Colonic mucosa (tissue), 4 donors: ENCODE measurements at regions of chr22 and their contacts with region 1.

Region 1: GRCh38 chr22:23767673-23768548 is at the start of gene CHCHD10:
- DNase-seq: peak; percentile 90
- H3K4me3 ChIP-seq: peak within 1 kb of the TSS; percentile 80
- H3K27ac ChIP-seq: peak within 1 kb of the TSS; percentile 77
- H3K4me1 ChIP-seq: peaks cover 10% of the 10 kb centered on the region
- H3K27me3 ChIP-seq: no peaks in the 10 kb centered on the region
- CTCF ChIP-seq: peak; percentile 85
- total RNA-seq, gene CHCHD10: 420 to 719 TPM

Region 2: DNA sequence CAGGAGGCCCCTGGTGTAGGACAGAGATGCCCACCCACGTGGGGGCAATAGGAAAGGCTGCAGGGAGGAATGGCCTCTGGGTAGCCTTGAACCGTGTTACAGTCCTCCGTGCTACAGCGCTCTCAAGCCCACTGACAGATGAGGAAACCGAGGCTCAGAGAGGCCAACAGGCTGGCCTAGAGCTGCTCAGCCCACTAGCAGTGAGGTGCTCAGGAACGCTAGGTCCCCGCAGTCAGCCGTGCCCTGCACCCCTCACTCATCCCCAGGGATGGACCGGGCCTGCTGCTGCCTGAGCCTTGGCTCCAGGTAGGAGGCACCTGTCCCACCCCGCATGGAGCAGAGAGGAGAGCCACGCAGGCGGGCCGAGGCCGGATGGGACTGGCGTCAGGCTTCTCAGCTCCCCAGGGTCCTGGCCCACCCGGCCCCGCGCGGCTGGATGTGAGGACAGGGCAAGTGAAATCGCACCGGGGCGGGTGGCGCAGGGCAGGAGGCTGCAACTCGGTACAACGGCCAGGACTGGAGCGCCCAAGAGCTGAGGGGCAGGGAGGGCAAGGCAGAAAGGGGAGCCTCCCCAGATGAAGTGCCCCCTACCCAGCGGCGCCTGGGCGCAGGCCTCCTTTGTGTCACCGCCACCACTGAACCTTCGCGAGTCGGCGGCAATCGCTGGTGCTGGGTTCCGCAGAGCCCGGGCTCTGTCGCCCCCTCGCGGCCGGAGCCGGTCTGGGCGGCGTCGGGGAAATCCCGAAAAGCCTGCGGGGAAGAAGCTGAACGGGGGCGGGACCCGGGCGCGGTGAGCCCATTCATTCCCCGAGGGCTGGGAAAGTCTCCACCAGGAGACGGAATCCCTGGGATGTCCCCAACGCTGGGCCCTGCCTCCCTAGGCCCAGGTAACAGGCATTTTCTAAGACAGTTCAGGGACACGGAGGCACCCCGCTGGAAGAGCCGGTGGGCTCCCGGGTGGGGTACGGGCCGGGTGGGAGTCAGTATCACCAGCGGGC is 81.4 kb after region 1 on chr22:
- intact Hi-C with region 1: loop called (anchors 5 kb)
- DNase-seq: peak; percentile 88
- H3K4me3 ChIP-seq: no peak overlapping the region
- H3K27ac ChIP-seq: no peak overlapping the region
- H3K4me1 ChIP-seq: peaks cover 9% of the 10 kb centered on the region
- H3K27me3 ChIP-seq: no peaks in the 10 kb centered on the region
- CTCF ChIP-seq: peak; percentile 99

Region 3: DNA sequence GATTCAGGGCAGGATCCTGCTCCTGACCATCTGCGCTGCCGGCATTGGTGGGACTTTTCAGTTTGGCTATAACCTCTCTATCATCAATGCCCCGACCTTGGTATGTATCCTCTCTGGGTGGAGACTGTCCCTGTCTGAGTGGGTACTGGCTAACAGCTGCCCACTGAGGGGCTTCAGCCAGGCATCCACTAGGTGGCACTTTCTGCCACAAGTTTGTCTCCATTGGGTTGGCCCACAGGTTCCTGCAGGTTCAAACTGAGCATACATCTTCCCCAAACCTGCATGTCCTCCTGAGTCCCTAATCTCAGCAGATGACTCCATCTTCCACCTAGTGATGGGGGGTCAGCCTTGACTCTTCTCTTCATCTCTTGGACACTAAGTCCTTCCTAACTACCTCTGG is 94.2 kb after region 1 on chr22:
- intact Hi-C with region 1: no loop called
- DNase-seq: no peak
- H3K4me3 ChIP-seq: no peak overlapping the region
- H3K27ac ChIP-seq: no peak overlapping the region
- H3K4me1 ChIP-seq: no peaks in the 10 kb centered on the region
- H3K27me3 ChIP-seq: no peaks in the 10 kb centered on the region
- CTCF ChIP-seq: peak; percentile 54